PC-3 (cell line): ENCODE measurements at regions of chr12 and their contacts with region 1.

Region 1: GRCh38 chr12:76422543-76423438 is 74.6 kb upstream of the BBS10 start:
- DNase-seq: peak; percentile 63
- ATAC-seq: peak; percentile 99
- H3K4me3 ChIP-seq: peak overlapping the region; percentile 46
- H3K27ac ChIP-seq: no peak overlapping the region
- H3K4me1 ChIP-seq: no peaks in the 10 kb centered on the region
- H3K27me3 ChIP-seq: no peaks in the 10 kb centered on the region
- CTCF ChIP-seq: no peak

Region 2: DNA sequence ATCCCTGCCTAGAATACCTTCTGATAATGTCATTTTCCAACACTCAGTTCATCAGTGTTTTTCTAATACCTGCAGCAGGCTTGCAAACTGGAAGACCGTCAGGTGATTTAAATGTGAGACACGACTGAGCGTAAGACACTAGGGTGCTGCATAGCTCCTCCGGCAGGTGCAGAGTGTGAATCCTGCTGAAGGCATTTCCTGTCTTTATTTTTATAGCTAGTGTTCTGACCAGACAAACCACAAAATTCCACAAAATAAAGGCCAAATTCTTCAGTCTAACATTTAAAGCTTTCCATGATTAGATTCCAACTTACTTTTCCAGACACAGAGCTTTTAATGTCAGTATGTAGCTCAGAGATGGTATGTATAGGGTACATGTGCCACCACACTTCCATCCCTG is 145.3 kb before region 1 on chr12:
- CTCF ChIA-PET with region 1: no interaction called
- POLR2A ChIA-PET with region 1: no interaction called
- intact Hi-C with region 1: no loop called
- DNase-seq: peak; percentile 57
- ATAC-seq: peak; percentile 78
- H3K4me3 ChIP-seq: no peak overlapping the region
- H3K27ac ChIP-seq: no peak overlapping the region
- H3K4me1 ChIP-seq: peaks cover 10% of the 10 kb centered on the region
- H3K27me3 ChIP-seq: no peaks in the 10 kb centered on the region
- CTCF ChIP-seq: no peak

Region 3: GRCh38 chr12:76374386-76375020 is 48.3 kb before region 1 on chr12:
- CTCF ChIA-PET with region 1: no interaction called
- POLR2A ChIA-PET with region 1: interaction called, 10 read pairs
- intact Hi-C with region 1: no loop called
- DNase-seq: peak; percentile 57
- ATAC-seq: 0 out of 2 replicates have a peak, but pooled peaks have one; percentile 11
- H3K4me3 ChIP-seq: 0 out of 2 replicates have a peak overlapping the region, but pooled peaks have one; percentile 42
- H3K27ac ChIP-seq: peak overlapping the region; percentile 88
- H3K4me1 ChIP-seq: peaks cover 49% of the 10 kb centered on the region
- H3K27me3 ChIP-seq: no peaks in the 10 kb centered on the region
- CTCF ChIP-seq: no peak

Region 4: GRCh38 chr12:76519538-76519937 is 96.7 kb after region 1 on chr12:
- CTCF ChIA-PET with region 1: no interaction called
- POLR2A ChIA-PET with region 1: no interaction called
- intact Hi-C with region 1: no loop called
- DNase-seq: peak; percentile 5
- ATAC-seq: no peak
- H3K4me3 ChIP-seq: no peak overlapping the region
- H3K27ac ChIP-seq: no peak overlapping the region
- H3K4me1 ChIP-seq: no peaks in the 10 kb centered on the region
- H3K27me3 ChIP-seq: no peaks in the 10 kb centered on the region
- CTCF ChIP-seq: no peak